Naive thymus-derived CD4-positive, alpha-beta T cell (primary cell): ENCODE measurements at regions of chr15 and their contacts with region 1.

Region 1: GRCh38 chr15:40564591-40565332 is at the start of gene CCDC32:
- DNase-seq: peak; percentile 75 to 96 (median 93)
- ATAC-seq: peak; percentile 95
- H3K4me3 ChIP-seq: peak within 1 kb of the TSS; percentile 85
- H3K4me3 Mint-ChIP-seq: peak within 1 kb of the TSS; percentile 80 to 97 (median 96)
- H3K27ac ChIP-seq: peak within 1 kb of the TSS; percentile 96
- H3K27ac Mint-ChIP-seq: peak within 1 kb of the TSS; percentile 82 to 98 (median 95)
- H3K4me1 ChIP-seq: peaks cover 11 to 15% of the 10 kb centered on the region in 2 donors
- H3K4me1 Mint-ChIP-seq: peaks cover 35 to 57% (median 55%) of the 10 kb centered on the region in 7 donors
- H3K27me3 ChIP-seq: no peaks in the 10 kb centered on the region
- H3K27me3 Mint-ChIP-seq: peaks cover 0 to 8% (median 0%) of the 10 kb centered on the region in 5 donors
- total RNA-seq, gene CCDC32: 22.4 to 37.3 (median 33.3) TPM

Region 2: DNA sequence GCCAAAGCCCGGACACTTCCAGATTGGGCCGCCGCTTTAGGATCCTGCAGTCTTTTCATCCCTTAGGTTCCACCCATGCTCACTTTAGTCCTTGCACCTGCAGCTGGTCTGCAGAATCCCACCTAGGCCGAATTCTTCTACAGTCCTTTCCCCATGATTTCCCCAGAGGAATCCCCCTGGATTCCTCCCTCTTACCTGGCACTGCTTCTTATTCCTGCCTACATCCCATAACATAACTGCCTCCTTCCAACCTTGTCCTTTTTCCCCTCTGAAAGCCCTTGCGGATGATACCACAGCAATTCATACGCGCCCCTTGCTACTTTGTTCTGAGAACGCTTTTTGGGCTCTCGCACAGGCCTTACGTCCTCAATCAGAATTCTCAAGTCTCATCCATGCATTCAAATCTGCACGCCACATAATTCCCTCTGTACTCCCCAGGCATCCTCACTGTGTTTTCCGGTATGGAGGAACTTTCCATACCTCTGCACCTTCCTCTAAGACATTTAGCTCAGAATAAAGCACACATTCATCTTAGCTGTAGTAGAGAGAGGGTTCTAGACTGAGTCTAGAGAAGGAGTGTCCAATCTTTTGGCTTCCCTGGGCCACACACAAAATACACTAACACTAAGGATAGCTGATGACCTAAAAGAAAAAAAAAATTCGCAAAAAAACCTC is 630.2 kb before region 1 on chr15:
- CTCF ChIA-PET with region 1: no interaction called
- POLR2A ChIA-PET with region 1: no interaction called
- intact Hi-C with region 1: loop called in 1 of 2 experiments (anchors 5 kb)
- DNase-seq: peak in 5 of 9 donors; percentile 5 to 14 (median 9)
- ATAC-seq: no peak
- H3K4me3 ChIP-seq: peak overlapping the region; percentile 76
- H3K4me3 Mint-ChIP-seq: peak overlapping the region; percentile 86 to 95 (median 89)
- H3K27ac ChIP-seq: peak overlapping the region; percentile 78
- H3K27ac Mint-ChIP-seq: peak overlapping the region; percentile 20 to 91 (median 64)
- H3K4me1 ChIP-seq: peaks cover 14 to 16% of the 10 kb centered on the region in 2 donors
- H3K4me1 Mint-ChIP-seq: peaks cover 28 to 50% (median 33%) of the 10 kb centered on the region in 7 donors
- H3K27me3 ChIP-seq: no peaks in the 10 kb centered on the region
- H3K27me3 Mint-ChIP-seq: peaks cover 0 to 6% (median 0%) of the 10 kb centered on the region in 5 donors

Region 3: GRCh38 chr15:40357723-40358470 is 206.9 kb before region 1 on chr15 and contains the start of gene DISP2:
- CTCF ChIA-PET with region 1: no interaction called
- POLR2A ChIA-PET with region 1: no interaction called
- intact Hi-C with region 1: loop called in 1 of 2 experiments (anchors 2 kb)
- DNase-seq: peak; percentile 80 to 97 (median 91)
- ATAC-seq: peak; percentile 94
- H3K4me3 ChIP-seq: peak within 1 kb of the TSS; percentile 63
- H3K4me3 Mint-ChIP-seq: peak within 1 kb of the TSS; percentile 75 to 90 (median 83)
- H3K27ac ChIP-seq: no peak within 1 kb of the TSS
- H3K27ac Mint-ChIP-seq: peak within 1 kb of the TSS in 2 of 9 donors; percentile 38 to 48
- H3K4me1 ChIP-seq: peaks cover 0 to 12% of the 10 kb centered on the region in 2 donors
- H3K4me1 Mint-ChIP-seq: peaks cover 7 to 15% (median 13%) of the 10 kb centered on the region in 7 donors
- H3K27me3 ChIP-seq: no peaks in the 10 kb centered on the region
- H3K27me3 Mint-ChIP-seq: peaks cover 0 to 30% (median 9%) of the 10 kb centered on the region in 5 donors
- total RNA-seq, gene DISP2: 0.05 to 0.51 (median 0.07) TPM in 4 of 5 experiments, not detected in the other

Region 4: DNA sequence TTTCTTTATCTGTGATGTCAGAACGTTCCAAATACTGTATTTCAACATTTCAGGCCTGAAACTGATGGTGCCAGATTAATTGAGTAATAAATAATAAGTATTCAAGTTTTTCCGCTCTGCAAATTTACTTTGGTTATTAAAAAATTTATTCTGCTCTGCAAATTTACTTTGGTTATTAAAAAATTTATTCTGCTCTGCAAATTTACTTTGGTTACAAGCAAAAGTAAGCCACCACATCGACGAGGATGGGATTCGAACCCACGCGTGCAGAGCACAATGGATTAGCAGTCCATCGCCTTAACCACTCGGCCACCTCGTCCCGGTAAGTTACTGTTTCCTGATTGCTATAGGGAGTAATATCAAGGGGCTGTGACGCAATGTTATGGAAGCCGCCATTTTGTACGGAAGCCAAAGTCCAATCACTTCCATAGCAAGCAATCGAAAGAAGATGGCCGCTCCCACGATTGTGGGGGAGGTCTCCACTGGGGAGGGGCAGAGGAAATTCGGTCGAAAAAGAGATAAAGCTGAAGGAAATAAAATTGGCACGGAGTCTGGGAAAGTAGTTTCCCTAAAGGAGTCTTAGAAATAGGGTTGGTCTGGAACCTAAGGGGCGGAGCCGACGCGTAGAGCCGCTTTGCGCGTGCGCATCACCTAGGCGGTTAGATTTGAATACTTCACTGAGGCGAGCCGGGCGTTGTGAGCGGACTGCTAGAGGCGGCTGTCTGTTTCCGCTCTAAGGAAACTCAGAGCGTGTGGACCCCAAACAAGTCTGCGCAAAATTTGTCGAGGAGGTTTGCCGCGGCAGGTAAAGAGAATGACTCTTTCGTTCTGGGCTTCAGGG is 29.0 kb after region 1 on chr15 and contains the start of gene KNL1:
- CTCF ChIA-PET with region 1: interaction called, 7 read pairs
- POLR2A ChIA-PET with region 1: interaction called, 12 read pairs
- intact Hi-C with region 1: loop called (anchors 1 kb)
- DNase-seq: peak; percentile 83 to 94 (median 91)
- ATAC-seq: peak; percentile 85
- H3K4me3 ChIP-seq: peak within 1 kb of the TSS; percentile 98
- H3K4me3 Mint-ChIP-seq: peak within 1 kb of the TSS; percentile 91 to 99 (median 96)
- H3K27ac ChIP-seq: peak within 1 kb of the TSS; percentile 83
- H3K27ac Mint-ChIP-seq: peak within 1 kb of the TSS; percentile 91 to 100 (median 98)
- H3K4me1 ChIP-seq: peaks cover 11 to 12% of the 10 kb centered on the region in 2 donors
- H3K4me1 Mint-ChIP-seq: peaks cover 13 to 41% (median 25%) of the 10 kb centered on the region in 7 donors
- H3K27me3 ChIP-seq: no peaks in the 10 kb centered on the region
- H3K27me3 Mint-ChIP-seq: peaks cover 0 to 12% (median 6%) of the 10 kb centered on the region in 5 donors
- total RNA-seq, gene KNL1: 0.16 to 41.5 (median 1.7) TPM

Region 5: DNA sequence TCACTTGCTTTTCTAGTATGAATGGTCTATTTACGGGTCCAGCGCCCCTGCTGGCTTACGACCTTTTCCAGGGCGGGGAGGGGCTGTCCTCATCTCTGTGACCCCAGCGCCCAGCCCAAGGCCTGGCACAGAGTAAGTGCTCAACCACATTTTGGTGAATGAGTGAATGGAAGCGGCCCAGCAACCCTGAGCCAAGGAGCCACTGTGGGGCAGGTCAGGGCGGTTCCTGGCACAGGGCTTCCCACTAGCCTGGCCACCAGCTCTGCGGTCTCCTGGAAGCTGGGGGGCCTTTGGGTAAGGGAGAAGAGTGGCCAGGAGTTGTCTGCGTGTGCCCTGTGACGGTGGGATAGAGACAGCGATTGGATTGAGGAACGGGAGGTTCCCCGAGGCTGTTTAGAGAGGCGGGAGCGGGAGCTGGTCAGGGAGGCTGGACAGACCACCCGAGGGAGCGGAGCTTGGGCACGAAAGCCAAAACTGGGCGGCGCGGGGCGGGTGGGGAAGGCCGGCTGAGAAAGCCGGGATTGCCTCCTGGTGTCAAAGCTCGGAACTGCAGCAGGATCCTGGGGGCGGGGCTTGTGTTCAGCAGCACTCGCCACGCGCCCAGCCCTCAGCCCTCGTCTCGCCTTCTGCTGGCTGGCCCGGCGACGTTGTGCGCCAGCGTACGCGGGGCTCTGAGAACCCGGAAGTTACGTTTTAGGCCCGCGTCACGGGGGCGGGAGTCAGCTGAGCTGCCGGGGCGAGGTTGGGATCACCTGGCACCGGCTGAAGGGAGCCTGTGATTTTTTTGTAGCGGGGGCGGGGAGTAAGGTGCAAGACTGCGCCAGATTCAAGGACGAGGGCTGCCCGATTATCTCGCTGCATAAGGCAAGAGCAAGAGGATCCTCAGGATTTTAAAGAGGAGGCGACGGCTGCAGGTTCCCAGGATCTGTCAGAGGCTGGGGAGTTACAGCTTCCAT is 329.2 kb after region 1 on chr15 and contains the start of gene VPS18:
- CTCF ChIA-PET with region 1: no interaction called
- POLR2A ChIA-PET with region 1: interaction called, 3 read pairs
- intact Hi-C with region 1: loop called in 1 of 2 experiments (anchors 10 kb)
- DNase-seq: peak; percentile 96 to 99 (median 98)
- ATAC-seq: peak; percentile 99
- H3K4me3 ChIP-seq: peak within 1 kb of the TSS; percentile 94
- H3K4me3 Mint-ChIP-seq: peak within 1 kb of the TSS; percentile 96 to 99 (median 98)
- H3K27ac ChIP-seq: peak within 1 kb of the TSS; percentile 83
- H3K27ac Mint-ChIP-seq: peak within 1 kb of the TSS; percentile 87 to 98 (median 96)
- H3K4me1 ChIP-seq: peaks cover 17 to 18% of the 10 kb centered on the region in 2 donors
- H3K4me1 Mint-ChIP-seq: peaks cover 30 to 47% (median 37%) of the 10 kb centered on the region in 7 donors
- H3K27me3 ChIP-seq: no peaks in the 10 kb centered on the region
- H3K27me3 Mint-ChIP-seq: peaks cover 0 to 7% (median 0%) of the 10 kb centered on the region in 5 donors
- total RNA-seq, gene VPS18: 19.9 to 22.3 (median 20.5) TPM

Region 6: GRCh38 chr15:41493205-41493901 is 928.6 kb after region 1 on chr15 and contains the start of gene ITPKA:
- CTCF ChIA-PET with region 1: no interaction called
- POLR2A ChIA-PET with region 1: no interaction called
- intact Hi-C with region 1: loop called in 1 of 2 experiments (anchors 5 kb)
- DNase-seq: peak; percentile 55 to 95 (median 67)
- ATAC-seq: peak; percentile 93
- H3K4me3 ChIP-seq: peak within 1 kb of the TSS; percentile 70
- H3K4me3 Mint-ChIP-seq: peak within 1 kb of the TSS; percentile 74 to 91 (median 87)
- H3K27ac ChIP-seq: peak within 1 kb of the TSS; percentile 29
- H3K27ac Mint-ChIP-seq: peak within 1 kb of the TSS in 4 of 9 donors; percentile 26 to 62 (median 57)
- H3K4me1 ChIP-seq: peaks cover 11 to 20% of the 10 kb centered on the region in 2 donors
- H3K4me1 Mint-ChIP-seq: peaks cover 6 to 35% (median 8%) of the 10 kb centered on the region in 7 donors
- H3K27me3 ChIP-seq: peaks cover 0 to 8% of the 10 kb centered on the region in 2 donors
- H3K27me3 Mint-ChIP-seq: peaks cover 33 to 44% (median 41%) of the 10 kb centered on the region in 5 donors
- total RNA-seq, gene ITPKA: 0.20 to 0.97 TPM in 2 of 5 experiments, not detected in the others